ENCODE measurements at regions of chrX and their contacts with region 1.

Region 1: GRCh38 chrX:70433848-70434351 is 10.7 kb upstream of the DLG3 start:
- DNase-seq: peak; percentile 92
- H3K4me3 ChIP-seq: peak overlapping the region; percentile 61 to 72 (median 66)
- H3K27ac ChIP-seq: peak overlapping the region; percentile 64 to 85 (median 78)
- H3K4me1 ChIP-seq: peaks cover 0 to 15% (median 12%) of the 10 kb centered on the region in 4 donors
- H3K27me3 ChIP-seq: no peaks in the 10 kb centered on the region
- CTCF ChIP-seq: peak; percentile 59 to 76 (median 59)
- EP300 ChIP-seq: no peak
- POLR2A ChIP-seq: no peak

Region 2: DNA sequence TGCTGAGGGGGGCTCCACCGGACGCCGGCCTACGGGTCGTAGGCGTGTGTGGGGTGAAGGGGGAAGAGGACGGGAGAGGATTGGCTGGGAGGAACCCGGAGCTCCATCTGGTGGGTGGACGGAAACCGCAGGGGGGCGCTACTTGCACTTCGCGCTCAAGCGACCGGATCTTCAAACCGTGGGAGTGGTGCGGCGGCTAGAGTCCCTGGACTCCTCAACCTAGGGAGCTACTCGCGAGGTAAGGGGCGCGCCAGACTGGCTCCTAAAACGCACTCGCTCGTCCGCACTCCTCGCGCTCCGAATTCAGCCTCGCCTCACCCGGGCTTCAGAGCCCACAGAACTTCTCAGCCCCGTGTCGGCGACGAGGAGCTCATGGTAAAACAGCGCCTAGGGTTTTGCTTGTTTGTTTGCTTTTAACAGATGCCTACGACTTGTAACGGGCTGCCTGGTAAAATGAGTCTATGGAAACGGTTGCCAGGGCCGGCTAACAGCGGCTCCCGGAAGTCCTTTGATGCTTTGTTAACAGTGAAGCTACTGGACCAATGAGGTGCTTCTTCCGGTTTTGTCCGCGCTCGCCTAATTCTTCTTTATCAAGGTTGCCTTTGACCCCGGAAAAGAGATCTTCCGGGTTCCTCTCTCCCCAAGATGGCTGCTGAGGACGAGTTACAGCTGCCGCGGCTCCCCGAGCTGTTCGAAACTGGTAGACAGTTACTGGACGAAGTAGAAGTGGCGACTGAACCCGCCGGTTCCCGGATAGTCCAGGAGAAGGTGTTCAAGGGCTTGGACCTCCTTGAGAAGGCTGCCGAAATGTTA is 300.4 kb before region 1 on chrX and contains the start of gene IGBP1:
- intact Hi-C with region 1: loop called (anchors 10 kb)
- DNase-seq: peak; percentile 92
- H3K4me3 ChIP-seq: peak within 1 kb of the TSS; percentile 67 to 74 (median 70)
- H3K27ac ChIP-seq: peak within 1 kb of the TSS; percentile 75 to 86 (median 82)
- H3K4me1 ChIP-seq: peaks cover 16 to 23% (median 22%) of the 10 kb centered on the region in 4 donors
- H3K27me3 ChIP-seq: no peaks in the 10 kb centered on the region
- CTCF ChIP-seq: peak; percentile 42 to 64 (median 49)
- EP300 ChIP-seq: no peak
- POLR2A ChIP-seq: no peak
- total RNA-seq, gene IGBP1: 48.2 to 69.0 (median 60.6) TPM

Region 3: DNA sequence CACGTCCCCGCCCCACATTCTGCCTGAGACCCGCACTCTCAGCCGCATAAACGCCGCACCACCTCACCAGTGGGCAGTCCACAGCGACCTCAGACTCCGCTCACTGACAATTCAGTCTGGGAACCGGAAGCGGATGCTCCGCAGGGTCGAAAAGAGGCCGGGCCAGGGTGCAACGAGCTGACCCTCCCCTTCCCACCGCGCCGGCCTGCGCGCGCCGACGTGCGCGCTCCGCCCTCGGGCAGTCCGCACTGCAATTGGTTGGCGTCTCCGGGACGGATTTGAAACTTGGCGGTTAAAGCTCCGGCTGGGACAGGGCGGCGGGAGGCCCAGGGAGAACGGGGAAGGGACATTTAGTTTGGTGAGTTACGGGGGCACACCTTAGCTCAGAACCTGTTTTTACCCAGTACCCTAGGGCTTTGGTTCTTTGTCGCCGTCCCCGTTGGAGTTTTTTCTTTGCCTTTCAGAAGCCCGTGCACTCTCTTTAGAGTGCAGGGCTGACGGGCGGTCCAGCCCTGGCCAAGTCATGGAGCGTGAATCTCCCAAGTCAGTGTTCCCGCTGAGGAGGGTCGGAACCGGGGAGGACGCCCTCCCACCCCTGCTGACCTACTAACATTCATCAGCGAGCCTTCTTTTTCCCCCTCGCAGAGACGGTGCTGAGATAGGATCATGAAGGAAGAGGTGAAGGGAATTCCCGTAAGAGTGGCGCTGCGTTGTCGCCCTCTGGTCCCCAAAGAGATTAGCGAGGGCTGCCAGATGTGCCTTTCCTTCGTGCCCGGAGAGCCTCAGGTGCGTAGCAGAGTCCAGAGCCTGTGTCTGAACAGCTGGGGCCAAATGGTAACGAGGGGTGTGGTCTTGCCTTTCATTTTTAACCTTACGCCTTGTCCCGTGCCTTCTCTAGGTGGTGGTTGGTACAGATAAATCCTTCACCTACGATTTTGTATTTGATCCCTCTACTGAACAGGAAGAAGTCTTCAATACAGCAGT is 143.8 kb before region 1 on chrX and contains the starts of genes KIF4A and PDZD11:
- intact Hi-C with region 1: loop called (anchors 10 kb)
- DNase-seq: peak; percentile 92
- H3K4me3 ChIP-seq: peak within 1 kb of the TSS; percentile 53 to 63 (median 56)
- H3K27ac ChIP-seq: peak within 1 kb of the TSS; percentile 58 to 80 (median 73)
- H3K4me1 ChIP-seq: peaks cover 8 to 15% (median 12%) of the 10 kb centered on the region in 4 donors
- H3K27me3 ChIP-seq: no peaks in the 10 kb centered on the region
- CTCF ChIP-seq: no peak
- EP300 ChIP-seq: no peak
- POLR2A ChIP-seq: no peak
- total RNA-seq, gene KIF4A: 0.06 to 0.42 (median 0.37) TPM
- total RNA-seq, gene PDZD11: 26.0 to 32.9 (median 29.4) TPM